Activated CD8-positive, alpha-beta T cell treated with anti-CD3 and anti-CD28 coated beads, Interleukin-2, amount 10 ng/mL, durations not matched to agents 7 days and 5 days (primary cell): ENCODE measurements at regions of chr15 and their contacts with region 1.

Region 1: GRCh38 chr15:37891766-37892368 is 42.6 kb upstream of the TMCO5A start:
- DNase-seq: no peak
- ATAC-seq: no peak
- H3K4me3 Mint-ChIP-seq: no peak overlapping the region
- H3K27ac Mint-ChIP-seq: no peak overlapping the region
- H3K4me1 Mint-ChIP-seq: no peaks in the 10 kb centered on the region
- H3K27me3 Mint-ChIP-seq: peaks cover 2% of the 10 kb centered on the region

Region 2: DNA sequence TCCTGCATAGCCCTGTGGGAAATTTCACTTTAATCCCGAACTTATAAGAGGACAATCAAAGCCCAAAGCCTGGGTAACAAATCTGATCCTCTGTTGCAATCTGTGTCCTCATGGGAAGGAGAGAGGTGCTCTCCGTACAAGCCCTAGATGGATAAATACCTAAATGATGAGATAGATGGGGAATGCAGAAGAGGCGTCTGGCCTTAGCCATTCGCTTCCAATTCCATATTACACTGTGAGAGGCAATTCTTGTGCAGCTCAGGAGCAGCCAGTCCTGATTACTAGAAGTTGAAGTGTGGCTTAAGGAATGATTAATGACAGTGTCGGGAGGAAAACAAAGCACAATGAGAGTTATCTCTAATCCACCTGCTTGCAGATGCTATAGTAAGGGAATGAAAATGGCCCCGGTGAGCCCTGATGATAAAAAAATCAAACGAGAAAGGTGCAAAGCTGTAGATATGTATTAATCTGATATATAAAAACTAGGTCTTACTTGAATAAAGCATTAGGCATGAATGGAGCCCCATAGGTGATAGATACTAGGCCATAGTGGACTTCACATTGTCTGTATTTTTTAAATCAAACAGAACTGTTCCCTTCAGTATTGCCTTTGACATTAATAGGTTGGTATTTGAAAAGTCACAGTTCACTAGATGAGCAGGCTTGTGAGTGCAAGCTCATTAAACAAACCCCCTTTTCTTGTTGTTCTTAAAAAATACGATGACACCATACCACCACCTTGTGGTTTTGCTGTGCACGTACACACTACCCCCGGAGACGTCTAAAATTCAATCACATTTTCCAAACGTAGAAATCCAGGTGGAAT is 11.6 kb before region 1 on chr15:
- CTCF ChIA-PET with region 1: interaction called, 14 read pairs
- POLR2A ChIA-PET with region 1: no interaction called
- DNase-seq: no peak
- ATAC-seq: no peak
- H3K4me3 Mint-ChIP-seq: no peak overlapping the region
- H3K27ac Mint-ChIP-seq: no peak overlapping the region
- H3K4me1 Mint-ChIP-seq: no peaks in the 10 kb centered on the region
- H3K27me3 Mint-ChIP-seq: peaks cover 11% of the 10 kb centered on the region